Esophagus squamous epithelium (tissue), 5 donors: ENCODE measurements at regions of chr5 and their contacts with region 1.

Region 1: DNA sequence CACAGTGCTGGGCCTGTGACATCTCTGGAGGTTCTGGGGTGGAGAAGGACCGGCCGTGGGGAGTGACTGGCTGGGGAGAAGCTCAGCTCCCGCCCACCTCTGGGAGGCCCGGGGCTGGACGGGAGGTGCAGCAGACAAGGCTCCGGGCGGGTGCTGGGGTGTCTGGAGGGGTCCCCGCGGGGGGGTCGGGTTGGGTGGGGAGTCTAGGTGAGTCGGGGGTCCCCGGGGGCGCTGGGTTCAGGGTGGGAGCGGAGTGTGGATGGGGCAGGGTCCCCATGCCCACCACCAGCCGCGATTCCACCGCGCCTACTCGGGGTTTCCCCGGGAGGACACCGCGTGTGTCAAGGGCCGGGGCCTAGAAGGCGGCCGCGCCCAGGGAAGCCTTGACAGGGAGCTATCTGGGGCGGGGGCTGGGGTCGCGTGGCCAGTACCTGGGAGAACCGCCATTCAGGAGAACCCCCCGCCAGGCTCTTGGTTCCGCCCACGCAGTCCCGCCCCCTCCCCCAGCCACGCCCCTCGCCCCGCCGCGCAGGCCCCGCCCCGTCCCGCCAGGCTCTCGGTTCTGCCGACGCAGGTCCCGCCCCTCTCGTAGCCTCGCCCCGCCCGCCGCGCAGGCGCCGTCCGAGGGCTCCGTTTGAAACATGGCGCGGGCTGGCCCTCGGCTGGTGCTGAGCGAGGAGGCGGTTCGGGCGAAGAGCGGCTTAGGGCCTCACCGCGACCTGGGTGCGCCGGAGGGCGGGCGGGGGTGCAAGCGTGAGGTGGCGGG is at the start of gene CEP72:
- DNase-seq: peak; percentile 29
- H3K4me3 ChIP-seq: peak within 1 kb of the TSS; percentile 83 to 97 (median 93)
- H3K27ac ChIP-seq: peak within 1 kb of the TSS; percentile 83 to 90 (median 88)
- H3K4me1 ChIP-seq: peaks cover 5 to 20% (median 11%) of the 10 kb centered on the region in 3 donors
- H3K27me3 ChIP-seq: peaks cover 0 to 16% (median 0%) of the 10 kb centered on the region in 4 donors
- CTCF ChIP-seq: no peak
- POLR2A ChIP-seq: peak in 1 of 4 donors; percentile 33
- total RNA-seq, gene CEP72: 2.7 to 8.6 (median 4.0) TPM

Region 2: DNA sequence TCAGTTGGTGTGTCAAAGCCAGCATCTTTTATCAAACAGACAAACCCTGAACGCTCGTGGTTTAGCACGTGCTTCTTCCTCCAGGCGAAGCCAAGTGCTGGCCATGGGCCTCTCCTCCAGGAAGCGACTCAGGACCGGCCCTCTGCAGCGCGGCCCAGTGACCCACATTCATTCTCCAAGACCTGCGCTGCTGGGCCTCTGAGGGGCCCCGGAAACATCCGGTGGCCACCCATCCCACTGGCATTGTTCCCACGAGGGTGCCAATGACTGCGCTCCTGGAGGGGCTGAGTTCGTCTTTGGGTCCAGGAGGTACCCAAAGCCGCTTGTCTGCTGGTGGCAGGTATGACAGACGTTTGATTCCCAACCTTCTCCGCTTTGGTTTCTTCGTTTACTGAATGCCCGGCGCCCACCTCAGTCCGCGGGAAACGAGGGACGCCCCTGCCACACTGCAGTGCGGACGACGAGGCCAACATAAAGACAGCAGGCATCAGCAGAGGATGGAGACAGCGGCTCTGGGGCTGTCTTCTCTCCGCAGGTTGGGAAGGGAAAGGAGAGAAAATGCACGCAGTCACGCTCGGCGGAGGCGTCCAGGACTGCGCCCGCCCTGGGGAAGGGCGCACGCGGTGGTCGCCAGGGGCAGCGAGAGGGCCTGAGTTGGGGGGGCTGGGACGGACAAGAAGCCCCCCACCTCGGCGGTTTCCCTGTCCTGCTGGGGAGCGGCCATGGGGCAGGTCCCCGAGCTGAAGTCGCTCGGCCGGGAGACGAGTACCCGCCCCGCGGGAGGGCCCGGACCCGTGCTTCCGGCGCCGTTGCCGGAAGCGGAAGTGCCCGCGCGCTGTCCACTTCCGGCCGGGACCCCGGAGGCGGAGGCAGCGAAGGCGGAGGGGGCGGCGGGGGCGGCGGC is 169.3 kb before region 1 on chr5 and contains the start of gene EXOC3:
- intact Hi-C with region 1: loop called (anchors 10 kb)
- DNase-seq: no peak
- H3K4me3 ChIP-seq: peak within 1 kb of the TSS; percentile 73 to 94 (median 84)
- H3K27ac ChIP-seq: peak within 1 kb of the TSS; percentile 86 to 94 (median 90)
- H3K4me1 ChIP-seq: peaks cover 20 to 52% (median 36%) of the 10 kb centered on the region in 3 donors
- H3K27me3 ChIP-seq: no peaks in the 10 kb centered on the region
- CTCF ChIP-seq: no peak
- POLR2A ChIP-seq: peak in 2 of 4 donors; percentile 39 to 66
- total RNA-seq, gene EXOC3: 39.1 to 54.6 (median 42.8) TPM

Region 3: GRCh38 chr5:683551-684481 is 71.9 kb after region 1 on chr5:
- intact Hi-C with region 1: no loop called
- DNase-seq: no peak
- H3K4me3 ChIP-seq: no peak overlapping the region
- H3K27ac ChIP-seq: no peak overlapping the region
- H3K4me1 ChIP-seq: no peaks in the 10 kb centered on the region
- H3K27me3 ChIP-seq: no peaks in the 10 kb centered on the region
- CTCF ChIP-seq: no peak
- POLR2A ChIP-seq: no peak

Region 4: GRCh38 chr5:1659100-1659981 is 1047.4 kb after region 1 on chr5:
- intact Hi-C with region 1: no loop called
- DNase-seq: no peak
- H3K4me3 ChIP-seq: no peak overlapping the region
- H3K27ac ChIP-seq: no peak overlapping the region
- H3K4me1 ChIP-seq: peaks cover 0 to under 1% (median 0%) of the 10 kb centered on the region in 3 donors
- H3K27me3 ChIP-seq: peaks cover 2 to 94% (median 4%) of the 10 kb centered on the region in 4 donors
- CTCF ChIP-seq: no peak
- POLR2A ChIP-seq: no peak